Mucosa of descending colon (tissue), 3 donors: ENCODE measurements at regions of chr6 and their contacts with region 1.

Region 1: DNA sequence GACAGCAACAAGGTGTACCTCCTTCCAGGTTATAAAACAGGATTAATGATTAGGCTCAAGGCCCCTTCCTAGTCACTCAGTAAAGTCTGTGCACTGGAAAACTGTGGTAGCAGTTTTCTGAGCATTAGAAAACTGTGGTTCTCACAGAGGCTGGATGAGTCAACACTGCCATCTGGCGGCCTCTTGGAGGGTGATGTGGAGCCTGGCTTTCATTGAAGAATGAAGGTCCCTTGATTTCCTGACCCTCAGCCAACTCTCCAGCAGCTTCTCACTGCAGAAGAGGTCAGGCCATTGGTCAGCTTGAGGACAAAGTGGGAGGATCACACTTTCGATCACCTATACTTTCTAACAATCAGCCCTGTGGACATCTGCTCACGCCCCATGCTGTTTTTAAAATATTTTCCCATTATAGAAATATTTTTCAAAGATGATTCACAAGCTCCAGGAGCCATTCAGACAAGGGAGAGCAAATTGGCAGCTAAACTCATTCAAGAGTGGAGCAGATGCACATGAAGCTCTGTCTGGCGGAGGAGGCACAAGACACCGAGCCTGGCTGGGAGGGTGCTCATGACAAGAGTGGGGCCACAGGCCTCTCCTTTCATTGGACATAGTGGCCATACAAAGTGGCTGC is 23.2 kb downstream of the PSMB1 start:
- DNase-seq: peak; percentile 56 to 85 (median 75)
- ATAC-seq: peak; percentile 88
- H3K4me3 ChIP-seq: no peak overlapping the region
- H3K4me1 ChIP-seq: no peaks in the 10 kb centered on the region
- CTCF ChIP-seq: peak; percentile 46

Region 2: GRCh38 chr6:169831450-169832246 is 698.3 kb before region 1 on chr6:
- intact Hi-C with region 1: loop called in 1 of 2 experiments (anchors 5 kb)
- DNase-seq: peak in 2 of 3 donors; percentile 75 to 78
- ATAC-seq: peak; percentile 91
- H3K4me3 ChIP-seq: no peak overlapping the region
- H3K4me1 ChIP-seq: peaks cover 6% of the 10 kb centered on the region
- CTCF ChIP-seq: peak; percentile 87